ENCODE measurements at regions of chr5 and their contacts with region 1.

Region 1: GRCh38 chr5:154754460-154755360 is 467 bp upstream of the LARP1 start:
- DNase-seq: peak; percentile 95 to 99 (median 99)
- H3K4me3 ChIP-seq: peak overlapping the region; percentile 79 to 99 (median 94)
- H3K27ac ChIP-seq: peak overlapping the region; percentile 83 to 99 (median 97)
- H3K27me3 ChIP-seq: no peaks in the 10 kb centered on the region
- CTCF ChIP-seq: peak in 49 of 56 donors; percentile 15 to 64 (median 41)

Region 2: DNA sequence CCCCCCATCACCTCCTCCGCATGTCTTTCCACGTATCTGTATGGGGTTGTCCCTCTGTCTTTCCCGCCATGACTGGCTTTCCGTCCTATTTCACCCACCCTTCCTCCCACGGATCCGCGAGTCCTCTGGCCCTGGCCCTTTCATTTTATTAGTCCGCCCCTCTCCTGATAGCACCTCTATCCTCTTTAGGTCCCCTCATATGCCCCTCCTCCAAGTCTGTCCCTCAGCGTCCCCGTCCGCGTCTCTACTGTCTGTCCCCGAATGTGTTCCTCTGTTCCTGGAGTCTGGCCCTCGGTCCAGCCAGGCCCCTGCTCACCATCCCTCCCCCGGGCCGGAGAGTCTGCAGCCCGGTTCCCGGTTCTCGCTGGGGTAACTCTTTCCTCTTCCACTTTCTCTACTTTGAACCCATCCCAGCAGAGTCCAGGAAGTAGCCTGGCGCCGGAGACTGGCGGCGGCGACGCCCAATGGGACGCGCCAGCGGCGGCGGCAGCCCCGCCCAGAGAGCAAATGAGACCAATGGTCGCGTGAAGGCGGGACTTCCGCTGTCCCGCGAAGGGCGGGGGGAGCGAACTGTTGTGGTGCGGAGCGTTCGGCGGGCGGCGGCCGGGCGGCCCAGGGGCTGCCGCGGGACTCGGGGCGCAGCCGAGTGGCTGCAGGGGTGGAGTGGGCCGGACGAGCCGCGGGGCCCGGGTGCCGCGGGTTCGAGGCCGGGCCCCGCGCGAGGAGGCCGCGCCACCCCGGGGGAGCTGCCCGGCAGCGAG is 309.1 kb before region 1 on chr5 and contains the start of gene SAP30L:
- intact Hi-C with region 1: loop called in 1 of 2 experiments (anchors 10 kb)
- DNase-seq: peak; percentile 89 to 97 (median 94)
- H3K4me3 ChIP-seq: peak within 1 kb of the TSS; percentile 69 to 99 (median 92)
- H3K27ac ChIP-seq: peak within 1 kb of the TSS in 53 of 59 donors; percentile 13 to 92 (median 72)
- H3K27me3 ChIP-seq: no peaks in the 10 kb centered on the region
- CTCF ChIP-seq: peak in 6 of 56 donors; percentile 2 to 31 (median 16)
- total RNA-seq, gene SAP30L: 22.8 to 74.9 (median 44.4) TPM

Region 3: DNA sequence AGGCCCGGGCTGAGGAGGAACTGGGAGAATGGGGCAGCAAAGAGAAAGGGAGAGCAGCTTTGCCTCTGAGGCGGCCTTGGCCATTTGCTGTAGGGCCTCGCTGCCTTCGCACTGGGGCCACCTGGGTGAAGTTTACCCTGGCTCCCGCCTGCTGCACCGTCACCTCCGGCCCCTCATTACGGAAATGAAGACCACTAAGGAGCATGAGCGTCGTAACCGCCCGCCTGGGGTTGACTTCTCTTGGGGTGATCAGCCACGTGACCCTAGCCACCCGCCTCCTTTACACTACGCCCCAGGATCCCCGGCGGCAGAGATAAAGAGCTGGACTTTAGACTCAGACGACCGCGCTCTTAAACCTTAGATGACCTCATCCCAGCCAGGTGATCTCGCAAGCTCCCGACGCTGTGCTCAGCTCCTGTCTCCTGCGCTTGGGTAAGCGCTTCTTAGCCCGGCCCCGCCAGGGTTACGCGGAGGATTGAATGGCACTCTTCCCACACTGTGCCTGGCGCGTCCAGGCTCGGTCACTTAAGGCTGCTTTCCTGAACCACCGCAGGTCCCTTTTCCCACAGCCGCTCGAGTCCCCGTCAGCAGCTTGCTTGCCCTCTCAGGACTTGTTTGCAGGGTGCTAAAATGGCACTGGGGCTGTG is 107.5 kb before region 1 on chr5:
- intact Hi-C with region 1: loop called in 1 of 2 experiments (anchors 2 kb)
- DNase-seq: peak in 2 of 10 donors; percentile 4 to 43
- H3K4me3 ChIP-seq: peak overlapping the region in 58 of 59 donors; percentile 1 to 71 (median 48)
- H3K27ac ChIP-seq: no peak overlapping the region
- H3K27me3 ChIP-seq: peaks cover 0 to 2% (median 0%) of the 10 kb centered on the region in 45 donors
- CTCF ChIP-seq: no peak

Region 4: DNA sequence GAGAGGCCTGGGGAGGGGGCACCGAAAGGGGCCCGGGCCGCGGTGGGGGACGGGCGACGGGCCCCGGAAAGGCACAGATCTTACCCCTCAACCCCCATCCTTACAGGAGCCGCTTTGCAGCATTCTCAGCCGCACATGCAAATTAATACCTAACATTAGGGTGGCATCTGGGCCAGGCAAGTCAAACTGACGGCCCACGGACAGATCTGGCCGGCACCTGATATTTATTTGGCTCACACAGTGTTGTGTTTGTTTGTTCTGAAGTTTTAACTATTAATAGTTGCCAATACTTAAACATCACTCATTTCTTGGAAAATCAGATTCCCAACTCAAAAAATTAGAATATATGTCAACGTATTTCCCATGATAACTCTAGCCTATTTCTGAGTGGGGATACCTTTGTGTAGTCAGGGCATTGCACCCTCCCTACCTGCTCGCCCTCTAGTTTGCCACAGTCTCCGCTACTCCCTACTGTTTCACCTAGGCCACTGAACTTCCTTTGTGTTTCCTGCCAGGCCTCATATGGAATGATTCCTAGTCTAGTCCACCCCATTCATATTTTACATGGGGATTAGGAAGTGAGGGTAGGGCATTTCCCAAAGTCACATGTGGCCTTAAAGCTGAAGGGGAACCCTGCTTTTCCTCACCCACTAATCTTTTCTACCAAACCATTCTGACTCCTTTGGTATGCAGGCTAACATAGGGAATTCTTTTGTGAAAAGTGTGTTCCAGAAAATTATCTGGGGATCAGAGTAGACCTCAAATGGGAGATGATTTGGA is 71.4 kb before region 1 on chr5:
- intact Hi-C with region 1: loop called (anchors 2 to 5 kb)
- DNase-seq: no peak
- H3K4me3 ChIP-seq: peak overlapping the region; percentile 33 to 80 (median 65)
- H3K27ac ChIP-seq: peak overlapping the region in 54 of 59 donors; percentile 12 to 91 (median 80)
- H3K27me3 ChIP-seq: no peaks in the 10 kb centered on the region
- CTCF ChIP-seq: no peak

Region 5: DNA sequence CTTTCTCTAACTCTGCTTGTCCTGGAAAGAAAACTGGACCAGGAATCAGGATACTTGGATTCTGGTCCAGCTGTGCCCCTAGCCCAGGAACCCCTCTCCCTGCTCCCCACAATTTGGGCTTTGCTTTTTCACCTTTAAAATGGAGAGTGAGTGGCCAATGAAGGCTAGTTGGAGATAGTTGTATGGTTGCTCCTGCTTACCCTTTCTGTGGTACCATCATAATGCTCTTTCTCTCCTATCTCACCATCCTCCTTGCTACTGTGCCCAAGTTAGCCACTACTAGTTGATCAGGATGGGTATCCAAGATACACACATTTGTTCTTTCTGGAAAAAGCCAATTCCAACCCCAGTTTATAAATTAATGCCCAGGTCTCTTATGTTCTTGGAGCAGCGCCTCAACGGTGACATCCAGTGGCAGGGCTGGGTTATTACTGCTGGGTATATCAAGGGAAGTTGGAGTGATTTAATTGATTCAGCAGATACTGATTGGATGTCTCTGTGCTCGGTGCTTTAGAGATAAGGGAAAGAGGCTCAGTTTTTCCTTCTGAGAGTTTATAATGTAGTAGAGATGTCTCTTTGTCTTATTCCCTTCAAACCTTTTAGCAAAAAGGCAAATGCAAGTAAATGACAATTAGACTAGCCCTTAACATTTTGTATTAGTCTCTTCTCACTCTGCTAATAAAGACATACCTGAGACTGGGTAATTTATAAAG is 57.1 kb after region 1 on chr5:
- intact Hi-C with region 1: loop called (anchors 5 kb)
- DNase-seq: peak in 9 of 10 donors; percentile 22 to 67 (median 50)
- H3K4me3 ChIP-seq: no peak overlapping the region
- H3K27ac ChIP-seq: peak overlapping the region in 14 of 59 donors; percentile 7 to 51 (median 25)
- H3K27me3 ChIP-seq: no peaks in the 10 kb centered on the region
- CTCF ChIP-seq: peak; percentile 69 to 92 (median 83)

Region 6: GRCh38 chr5:154857530-154858296 is 103.0 kb after region 1 on chr5:
- intact Hi-C with region 1: loop called (anchors 1 kb)
- DNase-seq: peak; percentile 84 to 96 (median 94)
- H3K4me3 ChIP-seq: peak overlapping the region; percentile 55 to 92 (median 82)
- H3K27ac ChIP-seq: peak overlapping the region; percentile 73 to 100 (median 99)
- H3K27me3 ChIP-seq: no peaks in the 10 kb centered on the region
- CTCF ChIP-seq: peak in 33 of 56 donors; percentile 2 to 40 (median 27)

Region 7: DNA sequence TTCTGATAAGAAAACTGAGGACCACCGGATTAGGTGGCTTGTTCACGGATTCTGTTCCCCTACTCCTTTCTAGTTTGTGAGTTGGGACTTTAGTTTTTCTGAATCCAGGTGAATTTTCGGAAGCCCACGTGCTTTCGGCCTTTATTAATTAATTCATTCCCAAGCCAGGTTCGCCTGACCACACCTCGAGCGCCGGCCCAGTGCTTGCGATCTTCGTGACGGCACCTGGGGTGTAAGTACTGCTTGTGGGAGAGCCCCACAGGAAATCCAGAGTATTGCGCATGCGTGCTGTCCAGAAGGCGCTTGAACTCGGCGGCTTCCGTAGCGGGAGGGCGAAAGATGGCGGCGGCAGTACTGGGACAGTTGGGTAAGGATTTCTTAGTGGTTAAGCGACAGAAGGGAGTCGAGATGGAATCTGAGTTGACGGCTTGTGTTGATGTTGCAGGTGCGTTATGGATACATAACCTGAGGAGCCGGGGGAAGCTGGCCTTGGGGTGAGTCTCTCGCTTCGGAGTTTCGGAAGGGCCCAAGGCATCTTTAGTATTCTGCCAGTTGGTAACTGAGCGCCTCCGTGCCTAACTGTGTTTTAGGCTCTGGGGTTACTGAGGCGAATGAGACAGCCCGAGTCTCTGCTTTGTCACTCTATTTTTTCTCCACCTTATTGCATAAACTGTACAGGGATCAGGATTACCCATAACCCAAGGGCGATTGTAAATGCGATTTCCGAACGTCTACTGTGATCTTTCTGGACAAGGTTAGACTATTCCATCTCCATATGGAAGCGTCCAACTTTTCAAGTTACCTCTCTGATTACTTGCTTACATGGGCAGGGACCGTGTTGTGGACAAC is 186.3 kb after region 1 on chr5 and contains the start of gene MRPL22:
- intact Hi-C with region 1: loop called (anchors 5 to 10 kb)
- DNase-seq: peak; percentile 84 to 94 (median 88)
- H3K4me3 ChIP-seq: peak within 1 kb of the TSS; percentile 54 to 96 (median 82)
- H3K27ac ChIP-seq: peak within 1 kb of the TSS; percentile 29 to 93 (median 82)
- H3K27me3 ChIP-seq: no peaks in the 10 kb centered on the region
- CTCF ChIP-seq: peak in 47 of 56 donors; percentile 5 to 64 (median 31)
- total RNA-seq, gene MRPL22: 21.8 to 47.2 (median 35.2) TPM